Activated CD4-positive, alpha-beta memory T cell treated with anti-CD3 and anti-CD28 coated beads, Interleukin-2, amount 10 ng/mL, durations not matched to agents 7 days and 5 days (primary cell): ENCODE measurements at regions of chr16 and their contacts with region 1.

Region 1: DNA sequence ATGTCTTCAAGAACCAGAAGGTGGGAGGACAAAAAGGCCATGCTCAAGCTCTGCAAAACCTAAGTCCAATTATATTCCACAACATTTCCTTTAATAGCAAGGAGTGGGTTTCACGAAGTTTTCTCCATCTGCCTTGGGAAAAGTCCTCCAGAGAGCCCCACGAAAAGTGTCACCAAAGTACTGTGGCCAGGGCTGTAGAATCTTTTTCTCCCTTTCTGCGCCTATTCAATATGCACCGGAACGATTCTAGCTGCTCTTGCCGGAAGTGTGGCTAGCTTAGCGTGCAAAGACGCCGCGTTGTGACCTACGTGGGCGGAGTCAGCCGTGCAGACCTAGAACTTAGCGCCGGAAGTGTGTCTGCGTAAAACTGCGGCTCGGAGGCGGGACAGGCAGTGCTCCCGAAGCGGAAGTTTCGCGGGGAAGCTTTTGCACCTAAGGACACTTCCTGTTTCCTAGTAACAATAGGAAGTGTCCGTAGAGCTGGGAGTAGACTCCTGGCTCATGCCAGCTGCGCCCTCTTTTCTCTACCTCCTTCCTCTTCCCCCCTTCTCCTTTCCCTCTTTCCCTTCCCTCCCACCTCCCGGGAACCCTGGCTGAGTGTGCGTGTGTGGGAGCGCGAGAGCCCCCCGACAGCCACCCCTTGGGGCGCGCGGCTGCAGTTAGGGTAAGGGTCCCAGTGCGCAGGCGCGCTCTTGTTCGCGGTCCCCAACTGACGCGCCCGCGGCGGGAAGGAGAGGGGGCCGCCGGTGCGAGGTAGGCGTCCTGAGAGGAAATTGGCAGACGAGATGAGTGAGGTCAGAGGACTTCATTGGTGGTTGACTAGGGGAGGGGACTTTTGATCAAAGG is at the starts of genes ZNF646 and ZNF668:
- DNase-seq: peak; percentile 99
- H3K4me3 Mint-ChIP-seq: peak within 1 kb of the TSS; percentile 97
- H3K27ac Mint-ChIP-seq: peak within 1 kb of the TSS; percentile 94
- H3K4me1 Mint-ChIP-seq: peaks cover 39% of the 10 kb centered on the region
- H3K27me3 Mint-ChIP-seq: no peaks in the 10 kb centered on the region
- total RNA-seq, gene ZNF646: 31.9 to 32.1 TPM
- total RNA-seq, gene ZNF668: 13.9 to 17.4 TPM

Region 2: DNA sequence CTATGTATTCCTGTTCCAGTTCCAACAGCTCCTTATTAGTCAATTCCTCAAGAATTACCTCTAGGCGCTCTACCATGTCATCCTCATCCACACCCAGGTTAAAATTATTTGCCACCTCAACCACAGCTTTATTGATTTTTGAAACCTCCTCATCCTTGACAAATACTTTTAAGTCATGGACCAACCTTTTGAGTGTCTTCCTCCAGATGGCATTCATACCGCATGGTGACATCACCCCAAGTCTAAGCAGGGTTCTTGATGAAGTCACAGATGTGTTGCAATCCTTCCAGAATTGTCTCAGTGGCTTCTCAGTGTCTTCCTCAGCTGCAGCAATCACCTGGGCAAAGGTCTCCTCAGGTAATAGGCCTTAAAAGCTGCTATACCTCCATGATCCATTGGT is 220.4 kb before region 1 on chr16:
- CTCF ChIA-PET with region 1: no interaction called
- POLR2A ChIA-PET with region 1: no interaction called
- DNase-seq: no peak
- H3K4me3 Mint-ChIP-seq: no peak overlapping the region
- H3K27ac Mint-ChIP-seq: no peak overlapping the region
- H3K4me1 Mint-ChIP-seq: no peaks in the 10 kb centered on the region
- H3K27me3 Mint-ChIP-seq: no peaks in the 10 kb centered on the region

Region 3: GRCh38 chr16:30941600-30942425 is 132.4 kb before region 1 on chr16:
- CTCF ChIA-PET with region 1: no interaction called
- POLR2A ChIA-PET with region 1: no interaction called
- DNase-seq: peak; percentile 81
- H3K4me3 Mint-ChIP-seq: peak overlapping the region; percentile 64
- H3K27ac Mint-ChIP-seq: peak overlapping the region; percentile 68
- H3K4me1 Mint-ChIP-seq: peaks cover 38% of the 10 kb centered on the region
- H3K27me3 Mint-ChIP-seq: no peaks in the 10 kb centered on the region

Region 4: DNA sequence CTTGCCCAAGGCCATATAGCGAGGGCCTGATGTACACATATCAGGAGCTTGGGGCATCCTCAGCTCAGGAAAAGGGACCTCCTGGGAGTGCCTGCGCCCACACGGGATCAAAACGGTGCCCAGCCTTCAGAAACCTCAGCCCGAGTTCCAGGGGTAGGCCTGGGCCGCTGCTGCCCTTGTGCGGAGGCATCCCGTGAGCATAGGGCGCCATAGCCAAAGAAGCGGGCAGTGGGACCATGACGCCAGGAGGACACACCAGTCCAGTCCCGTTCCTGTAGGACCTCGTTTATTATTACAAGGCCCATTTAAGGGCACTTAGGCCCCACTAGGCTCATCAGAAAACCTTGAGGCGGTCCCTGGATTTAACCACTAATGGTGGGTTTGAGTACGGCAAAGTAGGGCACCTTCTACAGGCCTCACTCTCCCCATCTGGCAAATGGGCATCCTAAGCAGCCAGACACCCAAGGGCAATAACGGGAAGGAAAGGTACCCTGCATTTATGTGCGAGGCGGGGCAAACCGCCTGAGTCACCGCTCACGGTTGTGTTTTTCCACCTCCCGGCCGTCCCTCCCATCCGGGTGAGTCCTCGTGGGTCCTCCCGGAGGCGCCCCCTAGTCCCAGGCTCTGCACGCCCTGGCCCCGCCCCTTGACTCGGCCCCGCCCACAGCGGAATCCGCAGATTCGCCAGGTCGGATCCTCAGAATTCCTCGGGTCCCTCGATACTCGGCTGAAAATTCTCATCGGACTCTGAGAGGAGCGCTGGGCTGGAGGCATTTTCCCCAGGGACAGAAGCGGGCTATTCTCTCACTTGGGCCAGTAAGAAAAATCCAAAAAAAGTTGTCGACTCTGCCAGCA is 117.4 kb before region 1 on chr16:
- CTCF ChIA-PET with region 1: interaction called, 4 read pairs
- POLR2A ChIA-PET with region 1: interaction called, 11 read pairs
- DNase-seq: peak; percentile 87
- H3K4me3 Mint-ChIP-seq: peak overlapping the region; percentile 90
- H3K27ac Mint-ChIP-seq: peak overlapping the region; percentile 99
- H3K4me1 Mint-ChIP-seq: peaks cover 45% of the 10 kb centered on the region
- H3K27me3 Mint-ChIP-seq: no peaks in the 10 kb centered on the region

Region 5: DNA sequence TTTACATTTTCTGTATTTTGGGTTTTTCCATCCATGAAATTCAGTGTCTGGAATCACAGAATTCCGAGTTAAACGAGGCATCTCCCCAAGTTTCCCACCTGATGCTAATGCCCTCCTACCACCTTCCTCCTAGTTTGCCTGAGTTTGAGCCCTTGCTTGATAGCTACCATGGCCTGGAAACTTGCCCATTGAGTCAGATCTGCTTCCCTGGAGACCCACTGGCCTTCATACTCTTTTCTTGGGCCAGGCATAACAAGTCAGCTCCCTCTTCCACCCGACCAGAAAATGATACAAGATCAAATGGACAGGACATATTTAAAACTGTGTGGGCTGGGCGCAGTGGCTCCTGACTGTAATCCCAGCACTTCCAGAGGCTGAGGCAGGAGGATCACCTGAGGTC is 106.4 kb before region 1 on chr16:
- CTCF ChIA-PET with region 1: no interaction called
- POLR2A ChIA-PET with region 1: no interaction called
- DNase-seq: no peak
- H3K4me3 Mint-ChIP-seq: no peak overlapping the region
- H3K27ac Mint-ChIP-seq: no peak overlapping the region
- H3K4me1 Mint-ChIP-seq: no peaks in the 10 kb centered on the region
- H3K27me3 Mint-ChIP-seq: no peaks in the 10 kb centered on the region

Region 6: DNA sequence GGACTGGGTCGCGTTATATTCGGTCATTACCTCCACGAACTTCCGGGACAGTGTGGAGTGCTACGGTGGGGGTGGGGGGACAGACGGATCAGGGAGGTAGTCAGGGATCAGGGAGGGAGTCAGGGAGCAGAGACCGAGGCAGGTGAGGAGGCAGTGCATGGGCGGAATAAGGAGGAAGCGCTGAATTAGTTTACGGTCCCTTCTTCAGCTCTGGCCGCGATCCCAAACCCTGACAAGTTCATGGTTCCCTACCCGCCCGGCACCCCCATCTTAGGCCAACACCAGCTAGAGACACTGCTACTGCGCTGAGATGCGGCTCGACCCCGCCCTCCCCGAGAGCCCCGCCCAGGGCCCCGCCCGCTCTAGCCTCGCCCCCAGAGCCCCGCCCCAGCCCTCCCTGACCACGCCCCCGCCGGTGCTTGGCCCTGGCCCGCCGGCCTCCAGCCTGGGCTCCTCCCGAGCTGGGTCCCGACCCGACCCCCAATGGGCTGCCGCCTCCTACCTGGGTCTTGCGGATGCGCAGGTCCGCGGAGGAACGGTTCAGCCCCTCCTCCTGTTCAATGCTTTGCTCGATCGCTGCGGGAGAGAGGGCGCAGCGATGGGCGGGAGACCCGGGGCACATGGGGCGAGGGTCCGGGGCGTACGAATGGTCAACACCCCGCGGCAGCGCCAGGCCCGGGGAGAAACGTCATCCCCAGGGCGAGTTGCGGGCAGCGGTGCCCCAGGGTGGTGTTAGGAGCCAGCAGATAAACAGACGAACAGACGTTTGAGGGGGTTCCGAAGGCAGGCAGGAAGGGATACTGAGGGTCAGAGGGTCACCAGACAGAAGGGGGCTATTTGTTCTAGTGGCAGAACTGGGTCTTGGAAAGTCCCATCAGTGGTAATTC is 76.9 kb before region 1 on chr16:
- CTCF ChIA-PET with region 1: no interaction called
- POLR2A ChIA-PET with region 1: interaction called, 11 read pairs
- DNase-seq: peak; percentile 88
- H3K4me3 Mint-ChIP-seq: peak overlapping the region; percentile 84
- H3K27ac Mint-ChIP-seq: peak overlapping the region; percentile 78
- H3K4me1 Mint-ChIP-seq: peaks cover 36% of the 10 kb centered on the region
- H3K27me3 Mint-ChIP-seq: peaks cover 12% of the 10 kb centered on the region

Region 7: GRCh38 chr16:31094424-31095120 is 20.4 kb after region 1 on chr16 and contains the start of gene VKORC1:
- CTCF ChIA-PET with region 1: interaction called, 12 read pairs
- POLR2A ChIA-PET with region 1: interaction called, 26 read pairs
- DNase-seq: peak; percentile 90
- H3K4me3 Mint-ChIP-seq: peak within 1 kb of the TSS; percentile 92
- H3K27ac Mint-ChIP-seq: peak within 1 kb of the TSS; percentile 85
- H3K4me1 Mint-ChIP-seq: peaks cover 33% of the 10 kb centered on the region
- H3K27me3 Mint-ChIP-seq: no peaks in the 10 kb centered on the region
- total RNA-seq, gene VKORC1: 66.0 to 66.1 TPM

Region 8: GRCh38 chr16:31142109-31143010 is 68.2 kb after region 1 on chr16:
- CTCF ChIA-PET with region 1: interaction called, 18 read pairs
- POLR2A ChIA-PET with region 1: interaction called, 21 read pairs
- DNase-seq: peak; percentile 99
- H3K4me3 Mint-ChIP-seq: peak overlapping the region; percentile 61
- H3K27ac Mint-ChIP-seq: peak overlapping the region; percentile 50
- H3K4me1 Mint-ChIP-seq: peaks cover 20% of the 10 kb centered on the region
- H3K27me3 Mint-ChIP-seq: peaks cover 7% of the 10 kb centered on the region

Region 9: GRCh38 chr16:31301708-31302400 is 227.7 kb after region 1 on chr16:
- CTCF ChIA-PET with region 1: no interaction called
- POLR2A ChIA-PET with region 1: no interaction called
- DNase-seq: no peak
- H3K4me3 Mint-ChIP-seq: no peak overlapping the region
- H3K27ac Mint-ChIP-seq: no peak overlapping the region
- H3K4me1 Mint-ChIP-seq: peaks cover 8% of the 10 kb centered on the region
- H3K27me3 Mint-ChIP-seq: peaks cover 20% of the 10 kb centered on the region

Region 10: DNA sequence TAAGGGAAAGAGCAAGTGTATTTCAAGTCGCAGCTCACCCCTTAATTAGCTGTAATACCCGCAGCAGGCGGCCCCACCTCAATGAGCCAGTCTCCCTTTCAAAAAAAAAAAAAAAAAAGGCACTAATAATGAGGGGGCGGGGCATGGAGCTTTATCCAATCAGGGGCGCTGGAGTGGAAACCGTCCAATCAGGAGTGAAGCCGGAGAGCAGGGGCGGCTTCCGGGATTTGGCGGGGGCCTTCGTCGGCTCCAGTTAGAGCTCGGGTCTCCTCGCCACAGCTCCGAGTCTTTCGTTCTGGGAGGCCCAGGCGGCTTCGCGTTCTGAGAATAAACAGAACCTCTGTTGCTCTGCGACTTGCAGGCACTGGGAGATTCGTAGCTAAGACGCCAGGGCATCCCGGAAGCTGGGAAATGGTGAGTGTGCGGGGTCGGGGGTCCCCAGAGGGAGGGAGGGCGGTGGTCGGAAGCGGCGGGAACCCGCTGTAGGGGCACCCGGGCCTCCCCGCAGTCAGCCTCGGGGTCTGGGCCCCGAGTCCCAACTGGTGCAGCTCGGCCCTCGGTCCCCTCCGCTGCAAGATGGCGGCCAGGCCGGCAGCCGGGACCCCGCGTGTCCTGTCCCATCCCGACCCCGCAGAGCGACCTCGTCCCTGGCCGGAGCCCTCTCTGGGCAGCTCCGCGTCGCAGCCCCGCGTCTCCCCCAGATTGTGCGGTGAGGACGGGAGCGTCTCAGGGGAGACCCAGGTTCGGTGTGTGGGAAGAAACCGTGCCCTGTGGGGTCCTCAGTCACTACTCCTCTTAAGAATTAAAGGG is 799.6 kb after region 1 on chr16 and contains the start of gene ZNF267:
- CTCF ChIA-PET with region 1: interaction called, 6 read pairs
- POLR2A ChIA-PET with region 1: interaction called, 10 read pairs
- DNase-seq: peak; percentile 95
- H3K4me3 Mint-ChIP-seq: peak within 1 kb of the TSS; percentile 87
- H3K27ac Mint-ChIP-seq: peak within 1 kb of the TSS; percentile 97
- H3K4me1 Mint-ChIP-seq: peaks cover 76% of the 10 kb centered on the region
- H3K27me3 Mint-ChIP-seq: no peaks in the 10 kb centered on the region
- total RNA-seq, gene ZNF267: 86.2 to 88.3 TPM